ENCODE measurements at regions of chr3 and their contacts with region 1.

Region 1: GRCh38 chr3:43286115-43286840 is at the start of gene SNRK:
- DNase-seq: peak; percentile 93
- H3K4me3 Mint-ChIP-seq: peak within 1 kb of the TSS; percentile 94
- H3K27ac Mint-ChIP-seq: peak within 1 kb of the TSS; percentile 95
- H3K4me1 Mint-ChIP-seq: peaks cover 38% of the 10 kb centered on the region
- H3K27me3 Mint-ChIP-seq: no peaks in the 10 kb centered on the region
- total RNA-seq, gene SNRK: 23.9 to 24.4 TPM

Region 2: GRCh38 chr3:43180027-43180426 is 106.3 kb before region 1 on chr3:
- CTCF ChIA-PET with region 1: no interaction called
- POLR2A ChIA-PET with region 1: no interaction called
- intact Hi-C with region 1: loop called (anchors 1 kb)
- DNase-seq: peak; percentile 54
- H3K4me3 Mint-ChIP-seq: no peak overlapping the region
- H3K27ac Mint-ChIP-seq: peak overlapping the region; percentile 54
- H3K4me1 Mint-ChIP-seq: peaks cover 37% of the 10 kb centered on the region
- H3K27me3 Mint-ChIP-seq: no peaks in the 10 kb centered on the region

Region 3: DNA sequence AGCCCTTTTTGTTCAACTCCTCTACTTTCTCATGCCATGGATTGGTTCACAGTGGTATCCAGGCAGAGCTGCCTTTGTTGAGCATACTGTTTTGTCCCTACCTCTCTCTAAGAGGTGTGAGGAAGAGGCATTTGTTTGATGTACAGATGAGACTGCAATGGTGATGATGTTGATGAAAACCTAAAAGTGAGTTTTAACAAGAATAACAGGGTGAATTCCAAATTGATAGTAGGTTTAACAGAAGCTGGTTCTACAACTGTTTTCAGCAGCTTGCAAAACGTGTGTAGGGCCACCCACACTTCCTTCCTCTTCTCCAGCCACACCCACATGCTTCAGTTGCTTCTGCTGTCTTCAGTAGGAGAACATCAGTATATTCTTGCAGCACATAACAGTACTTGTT is 10.3 kb after region 1 on chr3:
- CTCF ChIA-PET with region 1: interaction called, 10 read pairs
- POLR2A ChIA-PET with region 1: interaction called, 11 read pairs
- intact Hi-C with region 1: no loop called
- DNase-seq: peak; percentile 71
- H3K4me3 Mint-ChIP-seq: peak overlapping the region; percentile 55
- H3K27ac Mint-ChIP-seq: peak overlapping the region; percentile 81
- H3K4me1 Mint-ChIP-seq: peaks cover 73% of the 10 kb centered on the region
- H3K27me3 Mint-ChIP-seq: no peaks in the 10 kb centered on the region

Region 4: GRCh38 chr3:43378066-43378935 is 92.0 kb after region 1 on chr3:
- CTCF ChIA-PET with region 1: interaction called, 4 read pairs
- POLR2A ChIA-PET with region 1: no interaction called
- intact Hi-C with region 1: loop called (anchors 1 kb)
- DNase-seq: peak; percentile 77
- H3K4me3 Mint-ChIP-seq: no peak overlapping the region
- H3K27ac Mint-ChIP-seq: no peak overlapping the region
- H3K4me1 Mint-ChIP-seq: peaks cover 12% of the 10 kb centered on the region
- H3K27me3 Mint-ChIP-seq: no peaks in the 10 kb centered on the region

Region 5: GRCh38 chr3:43690400-43691119 is 404.3 kb after region 1 on chr3 and contains the start of gene ABHD5:
- CTCF ChIA-PET with region 1: no interaction called
- POLR2A ChIA-PET with region 1: no interaction called
- intact Hi-C with region 1: loop called (anchors 5 kb)
- DNase-seq: peak; percentile 92
- H3K4me3 Mint-ChIP-seq: peak within 1 kb of the TSS; percentile 84
- H3K27ac Mint-ChIP-seq: peak within 1 kb of the TSS; percentile 85
- H3K4me1 Mint-ChIP-seq: peaks cover 37% of the 10 kb centered on the region
- H3K27me3 Mint-ChIP-seq: no peaks in the 10 kb centered on the region
- total RNA-seq, gene ABHD5: 10.0 to 11.4 TPM

Measured in activated CD4-positive, alpha-beta memory T cell treated with anti-CD3 and anti-CD28 coated beads for 36 hours (primary cell).